ENCODE measurements at regions of chr5 and their contacts with region 1.

Region 1: GRCh38 chr5:38060354-38060753 is 198.0 kb upstream of the EGFLAM start:
- DNase-seq: peak; percentile 80
- ATAC-seq: peak; percentile 84
- H3K4me3 ChIP-seq: peak overlapping the region in 1 of 3 experiments; percentile 35; a peak in 1 of 6 replicates
- H3K27ac ChIP-seq: peak overlapping the region; percentile 44
- H3K4me1 ChIP-seq: peaks cover 35% of the 10 kb centered on the region
- H3K27me3 ChIP-seq: no peaks in the 10 kb centered on the region
- CTCF ChIP-seq: no peak
- EP300 ChIP-seq: peak in 1 of 2 experiments; percentile 77; a peak in 2 of 4 replicates
- POLR2A ChIP-seq: no peak
- RAD21 ChIP-seq: no peak

Region 2: GRCh38 chr5:38104497-38105230 is 44.3 kb after region 1 on chr5:
- CTCF ChIA-PET with region 1: no interaction called
- POLR2A ChIA-PET with region 1: no interaction called
- in situ Hi-C with region 1: no loop called
- intact Hi-C with region 1: loop called (anchors 5 kb)
- DNase-seq: peak; percentile 99
- ATAC-seq: peak; percentile 96
- H3K4me3 ChIP-seq: no peak overlapping the region; a peak in 1 of 6 replicates
- H3K27ac ChIP-seq: peak overlapping the region; percentile 92
- H3K4me1 ChIP-seq: peaks cover 86% of the 10 kb centered on the region
- H3K27me3 ChIP-seq: no peaks in the 10 kb centered on the region
- CTCF ChIP-seq: no peak
- EP300 ChIP-seq: peak; percentile 42 to 93; a peak in 3 of 4 replicates
- POLR2A ChIP-seq: 0 out of 4 replicates have a peak, but pooled peaks of 1 of the 2 experiments have one; percentile 2
- RAD21 ChIP-seq: no peak

Measured in HepG2 (cell line).